ENCODE measurements at regions of chr7 and their contacts with region 1.

Region 1: GRCh38 chr7:55271069-55271626 is 94.0 kb upstream of the LANCL2 start:
- DNase-seq: peak; percentile 23
- CTCF ChIP-seq: peak; percentile 39

Region 2: GRCh38 chr7:55288070-55288824 is 17.1 kb after region 1 on chr7:
- CTCF ChIA-PET with region 1: interaction called, 14 read pairs
- POLR2A ChIA-PET with region 1: no interaction called
- DNase-seq: no peak
- CTCF ChIP-seq: peak; percentile 4

Measured in GM10248 (cell line).